Activated T-helper 2 cell treated with anti-CD3 and anti-CD28 coated beads, Interferon-gamma antibody, Interleukin-2, Interleukin-4, amounts not matched to agents 10 μg/mL and 5 μg/mL and 100 μg/mL, durations not matched to agents 14 hours and 24 hours and 36 hours (primary cell): ENCODE measurements at regions of chr21 and their contacts with region 1.

Region 1: DNA sequence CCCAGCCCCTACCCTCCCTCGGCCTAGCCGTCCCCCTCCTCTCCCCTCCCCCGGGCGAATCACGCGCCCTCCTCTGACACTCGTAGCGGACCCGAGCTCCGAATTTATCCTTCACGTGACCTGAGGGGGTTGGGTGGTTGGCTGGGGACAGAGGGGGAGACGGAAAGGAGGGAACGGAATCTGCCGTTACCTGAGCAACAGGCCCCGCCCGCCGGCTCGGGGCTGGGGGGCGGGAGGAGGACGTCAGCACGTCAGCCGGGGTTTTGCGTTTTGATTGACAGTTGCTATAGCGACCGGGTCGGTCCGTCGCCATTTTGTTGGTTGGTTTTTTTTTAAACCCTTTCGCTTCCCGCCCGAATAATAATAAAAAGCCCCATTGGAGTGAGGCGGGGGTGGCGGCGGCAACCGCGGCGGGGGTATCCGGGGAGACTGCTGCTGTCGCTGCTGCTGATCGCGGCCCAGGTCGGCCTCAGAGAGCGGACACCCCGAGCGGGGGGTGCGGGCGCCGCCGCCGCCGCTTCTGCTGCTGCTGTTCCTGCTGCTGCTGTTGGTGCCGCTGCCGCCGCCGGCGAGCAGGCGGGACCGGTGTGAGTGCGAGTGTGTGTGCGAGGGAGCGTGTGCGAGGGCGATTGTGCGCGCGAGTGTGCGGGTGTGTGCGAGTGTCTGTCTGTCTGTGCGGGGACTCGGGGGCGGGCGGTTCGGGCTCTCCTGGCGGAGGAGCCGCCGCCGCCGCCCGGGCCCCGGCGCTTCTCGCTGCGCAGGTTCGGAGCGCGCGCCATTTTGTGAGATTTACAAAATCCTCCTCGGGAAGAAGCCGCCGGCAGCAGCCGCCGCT is at the start of gene DYRK1A:
- DNase-seq: peak; percentile 97
- H3K4me3 Mint-ChIP-seq: peak within 1 kb of the TSS; percentile 95
- H3K27ac Mint-ChIP-seq: peak within 1 kb of the TSS; percentile 99
- H3K4me1 Mint-ChIP-seq: peaks cover 38% of the 10 kb centered on the region
- H3K27me3 Mint-ChIP-seq: no peaks in the 10 kb centered on the region
- total RNA-seq, gene DYRK1A: 61.8 and 62.5 TPM in 2 replicates

Region 2: GRCh38 chr21:36989699-36990507 is 376.8 kb before region 1 on chr21:
- intact Hi-C with region 1: loop called (anchors 2 kb)
- DNase-seq: peak; percentile 86
- H3K4me3 Mint-ChIP-seq: peak overlapping the region; percentile 78
- H3K27ac Mint-ChIP-seq: peak overlapping the region; percentile 89
- H3K4me1 Mint-ChIP-seq: peaks cover 28% of the 10 kb centered on the region
- H3K27me3 Mint-ChIP-seq: no peaks in the 10 kb centered on the region

Region 3: DNA sequence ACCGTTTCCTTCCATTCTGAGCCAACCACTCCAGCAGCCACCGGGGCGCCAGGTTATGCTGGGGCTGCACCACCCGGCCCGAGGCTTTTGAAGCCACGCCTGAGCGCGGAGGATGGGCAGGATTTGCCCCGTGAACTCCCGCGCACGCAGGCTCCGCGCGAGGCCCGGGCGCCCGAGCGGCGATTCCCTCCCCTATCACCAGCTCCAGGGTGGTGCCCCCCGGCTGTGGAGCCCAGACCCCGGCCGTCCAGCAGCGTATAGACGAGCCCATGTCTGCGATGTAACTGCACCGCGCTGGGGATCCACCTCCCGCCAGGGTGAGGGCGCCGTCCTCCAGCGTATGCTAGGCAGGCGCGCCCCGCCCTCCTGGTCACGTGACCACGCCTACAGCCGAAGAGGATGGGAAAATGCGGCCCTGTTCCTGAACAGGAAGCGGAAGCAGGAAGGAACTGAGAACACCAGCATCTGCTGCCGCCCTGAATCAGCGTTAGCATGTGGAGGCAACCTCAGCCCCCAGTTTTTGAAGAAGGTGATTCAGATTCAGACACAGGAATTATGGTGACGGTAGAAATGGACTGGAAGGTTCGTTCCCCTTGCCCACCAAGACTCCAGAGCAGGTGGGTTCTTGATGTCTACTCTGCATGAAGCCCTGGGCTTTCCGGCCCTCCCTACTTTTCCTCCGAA is 145.6 kb before region 1 on chr21:
- intact Hi-C with region 1: loop called (anchors 1 kb)
- DNase-seq: peak; percentile 90
- H3K4me3 Mint-ChIP-seq: peak overlapping the region; percentile 88
- H3K27ac Mint-ChIP-seq: peak overlapping the region; percentile 95
- H3K4me1 Mint-ChIP-seq: peaks cover 53% of the 10 kb centered on the region
- H3K27me3 Mint-ChIP-seq: no peaks in the 10 kb centered on the region

Region 4: GRCh38 chr21:37237764-37238163 is 128.9 kb before region 1 on chr21:
- intact Hi-C with region 1: no loop called
- DNase-seq: no peak
- H3K4me3 Mint-ChIP-seq: no peak overlapping the region
- H3K27ac Mint-ChIP-seq: peak overlapping the region; percentile 75
- H3K4me1 Mint-ChIP-seq: peaks cover 39% of the 10 kb centered on the region
- H3K27me3 Mint-ChIP-seq: no peaks in the 10 kb centered on the region

Region 5: DNA sequence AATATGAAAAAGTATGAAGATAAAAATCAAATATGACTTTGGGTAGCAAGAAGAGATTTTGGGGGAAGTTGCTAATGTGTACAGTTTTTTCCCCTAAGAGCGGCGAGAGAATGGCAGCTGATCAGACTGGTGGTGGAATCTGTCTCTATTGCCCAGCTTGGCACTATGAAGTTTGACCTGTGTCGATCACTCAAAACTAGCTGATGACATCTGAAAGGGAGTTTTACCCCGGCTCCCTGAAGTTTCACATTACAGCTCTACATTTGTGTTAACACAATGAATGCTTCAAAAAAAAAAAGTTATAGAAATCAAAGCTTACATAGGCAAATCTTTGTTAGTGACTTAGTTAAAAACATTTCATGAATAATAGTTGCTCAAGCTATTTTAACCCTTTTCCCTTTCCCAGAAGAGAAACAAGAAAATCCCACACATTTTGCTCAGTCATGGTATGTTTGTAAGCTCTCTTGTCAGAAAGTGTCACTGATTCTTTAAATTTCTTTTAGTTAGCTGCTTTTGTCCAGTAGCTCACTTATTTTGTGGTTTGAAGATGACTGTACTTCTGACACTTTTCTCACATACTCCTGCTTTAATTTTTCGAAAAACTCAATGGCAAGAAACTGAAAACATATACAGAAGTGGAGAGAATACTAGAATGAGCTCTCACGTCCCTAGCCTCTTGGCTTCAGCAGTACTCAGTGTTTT is 41.2 kb after region 1 on chr21:
- intact Hi-C with region 1: loop called (anchors 1 kb)
- DNase-seq: no peak
- H3K4me3 Mint-ChIP-seq: no peak overlapping the region
- H3K27ac Mint-ChIP-seq: peak overlapping the region; percentile 75
- H3K4me1 Mint-ChIP-seq: peaks cover 63% of the 10 kb centered on the region
- H3K27me3 Mint-ChIP-seq: no peaks in the 10 kb centered on the region

Region 6: DNA sequence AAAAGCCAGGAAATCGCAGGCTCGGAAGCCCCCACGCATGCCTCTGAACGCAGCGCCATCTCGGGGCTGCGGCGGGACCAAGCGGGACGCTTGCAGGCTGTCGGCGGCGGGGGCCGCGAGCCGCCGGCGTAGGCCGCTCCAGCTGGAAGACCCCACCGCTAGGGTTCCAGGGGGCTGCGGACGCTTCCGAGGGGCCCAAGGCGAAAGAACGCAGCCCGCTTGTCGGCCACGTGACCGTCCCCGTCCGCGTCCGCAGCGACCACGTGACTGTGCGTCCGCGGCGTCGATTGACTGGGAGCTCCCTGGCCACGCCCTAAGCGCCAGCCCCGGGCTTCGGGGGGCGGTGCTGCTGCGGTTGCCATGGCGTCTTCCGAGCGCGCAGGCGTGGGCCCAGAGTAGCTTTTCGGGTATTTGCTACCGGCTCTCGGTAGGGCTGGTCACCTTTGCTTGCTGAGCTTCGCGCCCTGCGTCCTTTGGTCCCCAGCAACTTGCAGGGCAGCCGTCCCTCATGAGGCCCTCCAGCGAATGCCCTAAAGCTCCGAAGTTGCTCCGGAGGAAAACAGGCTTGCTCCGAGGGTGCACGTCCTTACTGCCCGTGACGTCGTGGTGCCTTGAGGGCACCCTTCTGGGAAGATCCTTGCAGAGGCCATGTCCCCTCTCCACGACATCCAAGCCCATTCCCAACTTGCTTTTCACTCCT is 197.1 kb after region 1 on chr21:
- intact Hi-C with region 1: loop called (anchors 1 kb)
- DNase-seq: peak; percentile 91
- H3K4me3 Mint-ChIP-seq: peak overlapping the region; percentile 86
- H3K27ac Mint-ChIP-seq: peak overlapping the region; percentile 98
- H3K4me1 Mint-ChIP-seq: peaks cover 17% of the 10 kb centered on the region
- H3K27me3 Mint-ChIP-seq: peaks cover 6% of the 10 kb centered on the region